ENCODE measurements at regions of chr1 and their contacts with region 1.

Region 1: DNA sequence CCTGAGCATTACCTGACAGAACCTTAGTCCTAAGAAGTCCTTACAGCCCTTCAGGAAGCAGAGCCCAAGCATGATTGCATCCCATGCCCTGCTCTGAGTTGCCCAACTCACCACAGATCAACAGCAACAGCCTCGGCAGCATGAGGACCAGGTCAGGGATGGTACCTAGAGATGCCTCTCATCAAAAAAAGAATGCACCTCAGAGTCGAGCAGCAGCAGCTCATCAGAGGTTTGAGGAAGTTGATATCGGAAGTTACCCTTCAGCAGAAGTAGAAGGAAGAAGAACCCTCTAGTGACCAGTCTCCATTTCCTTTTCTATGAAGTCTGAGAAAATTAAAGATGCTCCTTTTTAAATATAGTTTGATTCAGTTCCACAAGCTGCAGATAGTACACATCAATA is at the start of gene FCRL1:
- DNase-seq: peak; percentile 33
- ATAC-seq: peak; percentile 88
- H3K4me3 Mint-ChIP-seq: no peak within 1 kb of the TSS
- H3K27ac Mint-ChIP-seq: no peak within 1 kb of the TSS
- H3K4me1 Mint-ChIP-seq: peaks cover 28% of the 10 kb centered on the region
- H3K27me3 Mint-ChIP-seq: no peaks in the 10 kb centered on the region
- CTCF ChIP-seq: no peak
- total RNA-seq, gene FCRL1: 111 and 138 TPM in 2 replicates

Region 2: DNA sequence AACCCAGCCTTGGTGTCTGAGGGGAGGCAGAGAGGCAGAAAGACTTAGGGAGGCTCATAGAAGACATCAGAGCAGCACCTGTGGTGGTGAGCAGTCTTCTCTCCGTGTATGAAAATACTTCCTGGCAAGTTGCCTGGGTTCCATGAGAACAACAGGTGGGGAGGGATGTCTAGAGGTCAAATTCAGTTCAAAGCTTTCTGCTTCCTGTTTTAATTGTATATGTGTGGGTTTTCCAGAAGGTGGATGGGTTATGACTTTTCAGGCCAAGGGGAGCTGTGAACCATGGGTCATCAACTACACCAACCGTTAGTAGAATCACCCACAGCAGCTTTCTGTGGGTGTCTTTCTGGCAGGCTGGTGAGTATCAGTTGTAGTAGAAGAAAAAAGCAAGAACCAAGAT is 38.8 kb before region 1 on chr1:
- CTCF ChIA-PET with region 1: interaction called, 3 read pairs
- POLR2A ChIA-PET with region 1: interaction called, 27 read pairs
- intact Hi-C with region 1: loop called (anchors 2 kb)
- DNase-seq: no peak
- ATAC-seq: peak; percentile 22
- H3K4me3 Mint-ChIP-seq: peak overlapping the region; percentile 48
- H3K27ac Mint-ChIP-seq: peak overlapping the region; percentile 77
- H3K4me1 Mint-ChIP-seq: peaks cover 99% of the 10 kb centered on the region
- H3K27me3 Mint-ChIP-seq: no peaks in the 10 kb centered on the region
- CTCF ChIP-seq: no peak

Region 3: GRCh38 chr1:157831968-157832626 is 12.2 kb after region 1 on chr1:
- CTCF ChIA-PET with region 1: interaction called, 4 read pairs
- POLR2A ChIA-PET with region 1: interaction called, 25 read pairs
- intact Hi-C with region 1: loop called (anchors 1 kb)
- DNase-seq: no peak
- ATAC-seq: no peak
- H3K4me3 Mint-ChIP-seq: no peak overlapping the region
- H3K27ac Mint-ChIP-seq: no peak overlapping the region
- H3K4me1 Mint-ChIP-seq: peaks cover 50% of the 10 kb centered on the region
- H3K27me3 Mint-ChIP-seq: no peaks in the 10 kb centered on the region
- CTCF ChIP-seq: no peak

Region 4: DNA sequence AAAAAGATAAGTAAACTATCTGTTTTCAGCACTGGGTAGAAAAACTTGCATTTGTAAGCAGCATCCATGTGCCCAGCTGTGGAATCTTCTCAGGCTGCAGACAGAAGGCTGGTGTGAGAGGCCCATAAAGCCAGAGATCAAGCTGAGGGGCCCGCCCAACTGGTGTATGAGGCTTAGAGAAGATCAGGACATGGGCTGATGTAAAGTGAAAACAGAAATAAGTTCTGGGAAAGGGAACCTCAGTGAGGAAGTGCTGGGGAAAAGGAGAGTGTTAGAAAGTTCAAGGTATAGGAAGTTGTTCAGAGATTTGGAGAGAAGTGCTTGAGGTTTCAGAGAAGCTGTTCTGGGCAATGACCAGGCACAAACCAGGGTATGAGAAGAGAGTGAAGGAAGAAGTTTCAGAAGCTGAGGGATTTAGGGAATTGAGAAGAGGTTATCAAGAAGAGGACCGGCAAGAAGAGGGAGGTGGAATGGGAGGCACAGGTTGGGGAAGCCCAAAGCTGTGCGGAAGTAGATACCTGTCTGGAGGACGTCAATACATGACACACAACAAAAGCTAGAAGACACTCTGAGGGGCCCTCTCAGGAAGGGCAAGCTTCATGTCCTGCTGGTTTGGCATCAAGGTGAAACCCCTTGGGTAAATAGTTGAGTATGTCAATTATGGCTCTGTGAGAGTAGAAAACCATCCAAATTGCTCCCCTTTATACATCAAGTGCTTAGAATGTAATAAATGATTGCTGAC is 24.4 kb after region 1 on chr1:
- CTCF ChIA-PET with region 1: no interaction called
- POLR2A ChIA-PET with region 1: interaction called, 7 read pairs
- intact Hi-C with region 1: loop called (anchors 1 kb)
- DNase-seq: no peak
- ATAC-seq: no peak
- H3K4me3 Mint-ChIP-seq: no peak overlapping the region
- H3K27ac Mint-ChIP-seq: peak overlapping the region; percentile 47
- H3K4me1 Mint-ChIP-seq: peaks cover 72% of the 10 kb centered on the region
- H3K27me3 Mint-ChIP-seq: no peaks in the 10 kb centered on the region
- CTCF ChIP-seq: no peak

Region 5: DNA sequence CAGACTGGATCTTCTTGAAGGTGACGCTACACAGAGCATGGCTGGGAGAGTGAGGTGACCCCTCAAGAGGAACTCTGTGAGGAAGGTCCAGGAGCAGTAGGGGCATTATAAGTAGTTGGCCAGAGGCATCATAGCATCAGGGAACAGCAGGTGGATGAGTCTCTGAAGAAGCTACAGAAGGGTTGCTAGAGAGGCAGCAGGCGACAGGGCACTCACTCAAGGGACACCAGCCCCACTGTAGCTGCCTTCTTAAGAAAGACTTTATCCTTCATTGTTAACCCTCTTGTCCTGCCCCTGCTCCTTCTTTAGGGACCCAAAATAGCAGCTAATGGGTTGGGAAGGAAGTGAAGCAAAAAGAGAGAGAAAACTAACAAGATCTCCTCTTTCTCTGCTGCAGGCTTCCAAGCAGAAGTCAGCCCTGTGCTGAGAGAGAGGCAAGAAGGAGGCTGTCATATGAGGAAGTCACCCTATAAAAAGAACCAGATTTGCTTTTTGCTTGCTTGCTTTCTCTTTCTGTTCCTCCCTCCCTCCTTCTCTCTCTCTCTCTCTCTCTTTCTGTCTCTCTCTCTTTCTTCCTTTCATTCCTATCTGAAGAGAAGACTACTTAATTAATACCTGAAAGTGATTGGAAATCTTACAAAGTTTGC is 29.5 kb after region 1 on chr1:
- CTCF ChIA-PET with region 1: no interaction called
- POLR2A ChIA-PET with region 1: interaction called, 7 read pairs
- intact Hi-C with region 1: loop called (anchors 1 kb)
- DNase-seq: no peak
- ATAC-seq: peak; percentile 87
- H3K4me3 Mint-ChIP-seq: peak overlapping the region; percentile 81
- H3K27ac Mint-ChIP-seq: peak overlapping the region; percentile 94
- H3K4me1 Mint-ChIP-seq: peaks cover 64% of the 10 kb centered on the region
- H3K27me3 Mint-ChIP-seq: no peaks in the 10 kb centered on the region
- CTCF ChIP-seq: no peak

Measured in activated B cell treated with CpG ODN at 0.5 μM for 24 hours (primary cell).